ENCODE measurements at regions of chr3 and their contacts with region 1.

Region 1: DNA sequence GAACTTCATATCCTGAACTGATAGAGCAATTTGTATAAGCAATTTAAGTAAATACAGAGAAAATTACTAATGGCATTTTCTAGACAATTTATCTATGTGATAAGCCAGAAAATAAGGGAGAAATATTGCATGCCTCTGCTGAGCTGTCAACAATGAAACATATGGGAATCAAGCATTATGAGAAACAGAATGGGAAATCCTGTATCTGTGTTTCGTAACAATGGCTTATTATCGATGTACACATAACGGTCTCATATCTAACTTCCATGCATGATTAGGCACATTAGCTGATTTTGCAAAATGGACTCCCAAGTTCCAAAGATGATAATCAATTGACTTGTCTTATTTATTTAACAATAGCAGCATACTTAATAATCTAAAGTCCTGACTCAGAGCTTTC is 30.4 kb upstream of the KCNMB2 start:
- DNase-seq: no peak
- ATAC-seq: no peak
- H3K4me3 Mint-ChIP-seq: no peak overlapping the region
- H3K27ac Mint-ChIP-seq: no peak overlapping the region
- H3K4me1 Mint-ChIP-seq: no peaks in the 10 kb centered on the region
- H3K27me3 Mint-ChIP-seq: peaks cover 8% of the 10 kb centered on the region

Region 2: DNA sequence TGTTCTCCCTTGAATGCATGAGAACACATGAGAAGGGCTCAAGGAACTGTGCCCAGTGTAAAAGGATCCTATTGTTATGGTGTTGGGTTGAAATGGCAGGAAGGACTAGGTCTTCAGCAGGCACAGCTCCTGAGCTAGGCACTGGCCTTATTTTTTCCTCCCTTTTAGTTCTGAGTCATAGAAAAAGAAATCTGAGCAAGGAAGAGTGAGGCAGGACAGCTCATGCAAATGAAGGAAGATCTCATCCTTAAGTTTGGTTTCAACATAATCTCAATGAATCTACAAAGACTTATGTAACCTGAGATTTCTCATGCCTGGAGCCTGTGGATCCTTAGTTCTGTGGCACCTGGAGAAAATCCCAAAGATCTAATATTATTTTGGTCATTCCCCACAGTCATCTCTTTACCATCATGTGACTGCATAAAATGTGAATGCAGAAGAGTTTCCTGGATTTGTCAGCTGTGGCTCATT is 1120.0 kb before region 1 on chr3:
- CTCF ChIA-PET with region 1: no interaction called
- POLR2A ChIA-PET with region 1: interaction called, 10 read pairs
- intact Hi-C with region 1: no loop called
- DNase-seq: no peak
- ATAC-seq: peak; percentile 19
- H3K4me3 Mint-ChIP-seq: no peak overlapping the region
- H3K27ac Mint-ChIP-seq: no peak overlapping the region
- H3K4me1 Mint-ChIP-seq: peaks cover 4% of the 10 kb centered on the region
- H3K27me3 Mint-ChIP-seq: no peaks in the 10 kb centered on the region